ENCODE measurements at regions of chr15 and their contacts with region 1.

Region 1: DNA sequence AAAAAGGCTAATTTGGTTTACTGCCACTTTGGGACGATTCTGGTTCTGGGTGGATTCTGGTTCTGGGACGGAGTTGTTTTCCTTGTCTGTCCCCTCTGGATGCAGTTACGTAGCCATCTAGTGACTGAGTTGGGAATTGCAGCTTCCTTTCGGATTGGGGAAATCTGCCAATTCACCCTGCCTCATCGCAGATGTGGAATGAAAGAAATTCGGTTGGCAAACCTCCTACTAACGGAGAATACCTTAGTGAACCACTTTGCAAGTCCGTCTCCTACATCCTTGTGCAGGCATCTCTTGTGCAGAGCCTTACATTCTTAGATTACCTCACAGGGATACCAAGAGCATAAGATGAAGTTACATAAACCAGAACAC is 31.5 kb upstream of the AP4E1 start:
- DNase-seq: peak; percentile 38
- ATAC-seq: peak; percentile 70

Region 2: GRCh38 chr15:50675536-50676144 is 201.3 kb before region 1 on chr15:
- intact Hi-C with region 1: loop called (anchors 5 kb)
- DNase-seq: no peak
- ATAC-seq: no peak

Region 3: DNA sequence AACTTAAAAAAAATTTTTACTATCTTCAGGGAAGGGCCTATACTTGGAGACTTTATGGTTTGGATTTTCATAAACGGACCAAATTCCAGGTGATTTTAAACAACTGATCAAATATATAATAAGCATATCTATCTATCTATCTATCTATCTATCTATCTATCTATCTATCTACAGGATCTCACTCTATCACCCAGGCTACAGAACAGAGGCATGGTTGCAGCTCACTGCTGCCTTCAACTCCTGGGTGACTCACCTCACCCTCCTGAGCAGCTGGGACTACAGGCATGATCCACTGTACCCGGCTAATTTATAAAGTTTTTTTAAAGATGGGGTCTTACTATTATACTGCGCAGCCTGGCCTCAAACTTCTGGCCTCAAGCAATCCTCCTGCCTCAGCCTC is 118.2 kb before region 1 on chr15:
- intact Hi-C with region 1: loop called (anchors 10 kb)
- DNase-seq: no peak
- ATAC-seq: no peak

Measured in left ventricle myocardium superior (tissue), 1 donor.